ENCODE measurements at regions of chr2 and their contacts with region 1.

Region 1: DNA sequence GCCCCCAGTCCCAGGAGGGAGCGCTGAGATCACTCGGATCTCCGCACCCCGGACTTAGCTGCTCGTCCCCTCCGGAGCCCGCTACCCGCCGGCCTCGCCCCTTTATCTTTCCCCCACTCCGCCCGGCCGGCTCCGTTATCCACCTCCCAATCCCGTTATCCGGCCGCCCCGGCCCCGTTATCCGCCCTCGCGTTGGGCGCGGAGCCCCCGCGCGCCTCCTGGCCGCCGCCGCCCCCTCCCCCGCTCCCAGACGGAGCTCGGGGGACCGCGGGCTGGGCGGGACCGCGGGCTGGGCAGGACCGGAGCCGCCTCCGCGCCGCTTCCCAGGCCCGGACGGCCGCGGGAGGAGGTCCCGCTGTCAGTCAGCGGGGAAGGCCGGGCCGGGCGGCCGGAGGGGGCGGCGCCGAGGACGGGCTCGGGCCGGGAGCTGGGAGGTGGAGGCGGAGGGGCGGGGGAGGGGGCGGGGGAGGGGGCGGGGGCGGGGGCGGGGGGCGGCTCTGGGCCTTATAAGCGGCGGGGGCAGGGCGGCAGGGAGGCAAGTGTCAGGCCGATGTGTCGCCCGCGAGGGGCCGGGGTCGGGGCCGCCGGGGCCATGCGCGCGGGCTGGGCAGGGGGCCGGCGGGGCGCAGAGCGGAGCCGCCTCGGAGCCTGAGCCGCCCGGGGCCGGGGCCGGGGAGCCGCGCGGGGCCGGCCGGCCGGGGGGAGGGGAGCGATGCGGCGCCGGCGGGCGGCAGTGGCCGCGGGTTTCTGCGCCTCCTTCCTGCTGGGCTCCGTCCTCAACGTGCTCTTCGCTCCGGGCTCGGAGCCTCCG is at the start of gene PKDCC:
- DNase-seq: peak; percentile 91 to 97 (median 96)
- ATAC-seq: peak; percentile 86 to 90
- H3K4me3 ChIP-seq: peak within 1 kb of the TSS; percentile 94
- H3K27ac ChIP-seq: peak within 1 kb of the TSS; percentile 91
- H3K4me1 ChIP-seq: peaks cover 2% of the 10 kb centered on the region
- H3K27me3 ChIP-seq: no peaks in the 10 kb centered on the region
- total RNA-seq, gene PKDCC: 92.2 to 189 (median 131) TPM

Region 2: GRCh38 chr2:41933585-41934320 is 113.9 kb before region 1 on chr2:
- intact Hi-C with region 1: loop called in 3 of 4 experiments (anchors 5 to 10 kb)
- DNase-seq: no peak
- ATAC-seq: peak; percentile 42 to 45
- H3K4me3 ChIP-seq: no peak overlapping the region
- H3K27ac ChIP-seq: peak overlapping the region; percentile 93
- H3K4me1 ChIP-seq: peaks cover 18% of the 10 kb centered on the region
- H3K27me3 ChIP-seq: no peaks in the 10 kb centered on the region

Region 3: DNA sequence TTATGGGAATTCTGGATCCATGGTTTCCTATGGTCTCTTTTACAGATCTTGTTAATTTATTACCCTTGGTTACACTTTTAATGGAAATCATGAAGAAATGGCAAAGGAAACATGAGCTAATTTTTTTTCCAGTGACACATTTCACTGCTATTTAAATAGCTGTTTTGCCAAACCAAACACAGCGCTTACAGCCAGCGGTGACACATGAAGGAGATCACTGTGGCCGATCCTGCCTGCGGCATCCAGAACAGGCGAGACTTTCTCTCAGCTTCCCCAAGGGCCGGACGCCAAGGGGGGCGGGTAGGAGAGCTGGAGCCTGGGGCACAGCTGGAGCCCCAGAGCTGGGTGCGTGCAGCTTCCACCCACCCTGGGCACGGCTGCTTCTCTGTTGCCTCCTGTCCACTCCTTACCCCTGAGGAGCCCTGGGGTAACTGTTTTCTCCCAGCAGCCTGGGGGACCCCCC is 81.2 kb before region 1 on chr2:
- intact Hi-C with region 1: loop called in 1 of 4 experiments (anchors 5 kb)
- DNase-seq: peak; percentile 96 to 98 (median 97)
- ATAC-seq: peak; percentile 83 to 91
- H3K4me3 ChIP-seq: no peak overlapping the region
- H3K27ac ChIP-seq: peak overlapping the region; percentile 98
- H3K4me1 ChIP-seq: peaks cover 24% of the 10 kb centered on the region
- H3K27me3 ChIP-seq: no peaks in the 10 kb centered on the region

Measured in right cardiac atrium (tissue), 5 donors.